Activated T-helper 2 cell treated with anti-CD3 and anti-CD28 coated beads, Interferon-gamma antibody, Interleukin-2, Interleukin-4, amounts not matched to agents 10 μg/mL and 5 μg/mL and 100 μg/mL, durations not matched to agents 14 hours and 24 hours and 36 hours (primary cell): ENCODE measurements at regions of chr2 and their contacts with region 1.

Region 1: GRCh38 chr2:64523666-64524603 is at the start of gene AFTPH:
- DNase-seq: peak; percentile 99
- H3K4me3 Mint-ChIP-seq: peak within 1 kb of the TSS; percentile 100
- H3K27ac Mint-ChIP-seq: peak within 1 kb of the TSS; percentile 100
- H3K4me1 Mint-ChIP-seq: peaks cover 36% of the 10 kb centered on the region
- H3K27me3 Mint-ChIP-seq: peaks cover 5% of the 10 kb centered on the region
- total RNA-seq, gene AFTPH: 34.6 and 36.6 TPM in 2 replicates

Region 2: DNA sequence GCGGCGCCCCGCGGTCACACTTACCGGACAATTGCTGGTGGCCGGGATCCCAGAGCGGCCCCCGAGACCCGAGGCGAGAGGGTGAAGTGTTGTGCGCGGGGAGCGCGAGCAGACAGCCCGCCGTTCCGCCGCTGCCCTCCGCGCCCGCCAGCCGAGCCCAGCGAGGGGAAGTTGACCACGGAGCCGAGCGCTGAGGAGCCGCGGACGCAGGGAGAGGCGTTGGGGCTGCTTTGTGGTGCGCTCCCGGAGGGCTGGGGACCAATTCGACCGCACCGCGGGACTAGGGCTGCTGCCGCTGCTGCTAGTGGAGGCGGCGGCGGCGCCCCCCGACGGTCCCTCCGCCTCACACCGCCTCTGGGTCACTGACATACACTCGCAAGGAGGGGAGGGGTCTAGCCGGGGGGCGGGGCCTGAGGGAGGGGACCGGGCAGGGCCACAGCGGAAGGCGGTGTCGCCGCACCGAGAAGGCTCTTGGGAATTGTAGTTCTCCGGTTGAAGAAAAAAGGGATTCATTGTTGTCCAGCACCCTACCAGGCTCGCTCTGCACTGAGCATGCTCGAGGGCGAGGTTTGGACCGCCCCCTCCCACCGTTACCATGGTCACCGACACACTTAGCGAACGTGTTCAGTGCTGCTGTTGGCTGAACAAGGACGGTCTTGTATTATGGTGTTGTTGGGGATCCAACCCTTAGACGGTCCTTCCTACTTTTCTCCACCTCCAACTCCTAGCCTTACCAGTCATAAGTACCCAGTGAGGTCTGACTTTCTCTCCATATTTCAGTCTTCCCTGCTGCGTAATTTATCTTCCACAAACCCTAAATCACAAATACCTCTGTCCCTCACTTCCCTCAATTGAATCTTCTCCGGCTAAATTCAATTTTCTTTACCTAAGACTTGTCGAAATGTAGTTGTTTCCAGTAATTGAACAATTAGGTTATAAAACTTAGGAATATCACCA is 379.6 kb before region 1 on chr2 and contains the start of gene PELI1:
- intact Hi-C with region 1: loop called (anchors 5 kb)
- DNase-seq: peak; percentile 89
- H3K4me3 Mint-ChIP-seq: peak within 1 kb of the TSS; percentile 89
- H3K27ac Mint-ChIP-seq: peak within 1 kb of the TSS; percentile 91
- H3K4me1 Mint-ChIP-seq: peaks cover 23% of the 10 kb centered on the region
- H3K27me3 Mint-ChIP-seq: no peaks in the 10 kb centered on the region
- total RNA-seq, gene PELI1: 21.6 and 25.1 TPM in 2 replicates

Region 3: GRCh38 chr2:64482765-64483504 is 41.0 kb before region 1 on chr2:
- intact Hi-C with region 1: no loop called
- DNase-seq: no peak
- H3K4me3 Mint-ChIP-seq: no peak overlapping the region
- H3K27ac Mint-ChIP-seq: no peak overlapping the region
- H3K4me1 Mint-ChIP-seq: peaks cover 15% of the 10 kb centered on the region
- H3K27me3 Mint-ChIP-seq: peaks cover 23% of the 10 kb centered on the region

Region 4: DNA sequence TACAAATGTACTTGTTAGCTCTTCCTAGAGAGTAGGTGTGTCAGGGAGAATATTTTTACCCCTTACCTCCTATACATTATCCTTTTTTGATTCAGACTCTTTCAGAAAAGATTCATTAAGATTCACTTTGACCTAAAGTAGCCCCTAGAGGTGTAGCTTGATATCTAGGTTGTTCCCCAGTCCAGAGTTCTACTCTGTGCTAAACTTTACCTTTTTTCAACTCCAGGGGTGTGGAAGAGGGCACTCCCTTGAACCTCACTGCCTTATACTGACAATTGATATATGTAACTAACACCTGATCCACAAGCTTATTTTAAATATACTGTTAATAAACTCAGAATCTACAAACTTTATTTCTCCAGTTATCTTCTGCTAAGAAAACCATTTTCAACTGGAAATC is 30.2 kb after region 1 on chr2:
- intact Hi-C with region 1: loop called (anchors 2 kb)
- DNase-seq: no peak
- H3K4me3 Mint-ChIP-seq: no peak overlapping the region
- H3K27ac Mint-ChIP-seq: no peak overlapping the region
- H3K4me1 Mint-ChIP-seq: peaks cover 13% of the 10 kb centered on the region
- H3K27me3 Mint-ChIP-seq: no peaks in the 10 kb centered on the region

Region 5: DNA sequence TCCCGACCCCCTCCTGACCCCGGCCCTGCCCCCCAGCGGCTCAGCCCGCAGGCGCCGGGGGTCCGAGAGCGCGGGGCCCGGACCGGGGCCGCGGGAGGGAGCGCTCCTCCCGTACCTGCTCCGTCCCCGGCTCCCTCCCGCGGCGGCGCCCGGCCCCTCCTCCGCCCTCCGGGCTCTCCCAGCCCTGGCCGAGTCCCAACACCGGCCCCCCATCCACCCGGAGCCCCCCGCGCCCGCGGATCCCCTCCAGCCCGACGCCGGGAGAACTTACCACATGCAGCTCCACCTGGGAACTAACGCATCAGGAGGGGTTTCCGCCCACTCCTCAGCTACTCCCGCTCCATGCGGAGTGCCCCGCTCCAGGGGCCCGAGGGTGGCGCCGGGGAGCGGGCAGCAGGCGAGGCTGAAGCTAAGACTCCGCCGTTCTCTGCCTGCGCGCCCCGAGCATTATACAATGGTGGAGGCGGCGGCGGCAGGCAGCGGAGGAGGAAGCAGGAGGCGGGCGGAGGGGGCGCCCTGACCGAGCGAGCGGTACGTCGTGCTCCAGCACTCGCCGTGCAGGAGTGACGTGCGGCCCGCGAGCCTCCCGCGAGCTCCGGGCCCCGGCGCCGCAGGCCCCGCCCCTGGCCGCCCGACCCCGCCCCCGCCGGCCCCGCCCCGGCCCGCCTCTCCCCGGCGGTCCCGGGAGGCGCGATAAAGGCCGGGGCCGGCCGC is 129.6 kb after region 1 on chr2 and contains the start of gene SERTAD2:
- intact Hi-C with region 1: no loop called
- DNase-seq: peak; percentile 82
- H3K4me3 Mint-ChIP-seq: peak within 1 kb of the TSS; percentile 91
- H3K27ac Mint-ChIP-seq: peak within 1 kb of the TSS; percentile 90
- H3K4me1 Mint-ChIP-seq: peaks cover 63% of the 10 kb centered on the region
- H3K27me3 Mint-ChIP-seq: no peaks in the 10 kb centered on the region
- total RNA-seq, gene SERTAD2: 29.2 and 31.0 TPM in 2 replicates

Region 6: GRCh38 chr2:64737547-64737946 is 213.6 kb after region 1 on chr2:
- intact Hi-C with region 1: loop called (anchors 5 kb)
- DNase-seq: no peak
- H3K4me3 Mint-ChIP-seq: peak overlapping the region; percentile 28
- H3K27ac Mint-ChIP-seq: peak overlapping the region; percentile 79
- H3K4me1 Mint-ChIP-seq: peaks cover 45% of the 10 kb centered on the region
- H3K27me3 Mint-ChIP-seq: no peaks in the 10 kb centered on the region

Region 7: DNA sequence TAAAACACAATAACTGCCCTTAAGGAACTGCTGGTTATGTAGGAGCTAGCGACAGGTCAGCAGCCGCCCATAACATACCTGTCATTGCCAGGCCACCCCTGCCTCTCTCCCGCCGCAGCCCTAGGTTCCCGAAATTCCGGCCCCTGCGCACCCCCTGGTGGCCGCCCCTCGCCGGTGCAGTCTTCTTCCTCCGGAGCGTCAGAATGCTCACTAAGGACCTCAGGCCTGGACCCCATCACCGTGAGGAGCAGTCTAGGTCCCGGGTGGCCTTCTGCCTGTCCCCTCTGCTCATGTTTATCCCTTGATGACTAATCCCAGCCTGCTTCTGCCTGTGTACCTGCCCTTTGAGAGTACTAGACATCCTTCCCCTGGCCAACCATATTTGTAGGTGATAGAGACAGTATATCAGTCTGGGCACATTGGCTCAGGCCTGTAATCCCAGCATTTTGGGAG is 349.6 kb after region 1 on chr2:
- intact Hi-C with region 1: loop called (anchors 1 kb)
- DNase-seq: peak; percentile 73
- H3K4me3 Mint-ChIP-seq: no peak overlapping the region
- H3K27ac Mint-ChIP-seq: peak overlapping the region; percentile 12
- H3K4me1 Mint-ChIP-seq: peaks cover 6% of the 10 kb centered on the region
- H3K27me3 Mint-ChIP-seq: peaks cover 12% of the 10 kb centered on the region

Region 8: GRCh38 chr2:65129826-65130663 is 606.1 kb after region 1 on chr2 and contains the start of gene RAB1A:
- intact Hi-C with region 1: loop called (anchors 1 kb)
- DNase-seq: peak; percentile 98
- H3K4me3 Mint-ChIP-seq: peak within 1 kb of the TSS; percentile 100
- H3K27ac Mint-ChIP-seq: peak within 1 kb of the TSS; percentile 100
- H3K4me1 Mint-ChIP-seq: peaks cover 35% of the 10 kb centered on the region
- H3K27me3 Mint-ChIP-seq: peaks cover 6% of the 10 kb centered on the region
- total RNA-seq, gene RAB1A: 88.1 and 96.6 TPM in 2 replicates